ENCODE measurements at regions of chr4 and their contacts with region 1.

Region 1: GRCh38 chr4:88514557-88515511 is 8.7 kb downstream of the PYURF start:
- DNase-seq: no peak
- ATAC-seq: no peak
- H3K4me3 ChIP-seq: no peak overlapping the region
- H3K27ac ChIP-seq: no peak overlapping the region
- H3K4me1 ChIP-seq: peaks cover 0 to 3% (median 0%) of the 10 kb centered on the region in 12 donors
- H3K27me3 ChIP-seq: no peaks in the 10 kb centered on the region
- CTCF ChIP-seq: no peak
- POLR2A ChIP-seq: no peak

Region 2: DNA sequence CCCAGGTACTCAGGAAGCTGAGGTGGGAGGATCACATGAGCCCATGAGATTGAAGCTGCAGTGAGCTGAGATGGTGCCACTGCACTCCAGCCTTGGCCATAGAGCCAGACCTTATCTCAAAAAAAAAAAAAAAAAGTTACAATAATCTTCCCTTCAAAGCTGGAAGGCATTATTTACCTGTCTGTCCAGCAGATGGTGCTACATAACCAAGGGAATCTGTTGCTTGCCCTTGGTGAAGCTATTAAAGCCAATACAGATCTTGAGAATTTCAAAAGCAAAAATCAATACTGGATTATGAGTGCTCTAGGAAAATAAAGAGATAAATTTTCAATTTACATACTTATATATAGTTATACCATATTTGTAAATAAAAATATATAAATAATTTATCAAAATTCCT is 481.5 kb before region 1 on chr4:
- intact Hi-C with region 1: loop called in 8 of 10 experiments (anchors 5 to 10 kb)
- DNase-seq: peak in 2 of 5 donors; percentile 25 to 28
- ATAC-seq: peak in 3 of 4 donors; percentile 48 to 62 (median 62)
- H3K4me3 ChIP-seq: no peak overlapping the region
- H3K27ac ChIP-seq: no peak overlapping the region
- H3K4me1 ChIP-seq: peaks cover 0 to 11% (median 0%) of the 10 kb centered on the region in 12 donors
- H3K27me3 ChIP-seq: no peaks in the 10 kb centered on the region
- CTCF ChIP-seq: peak; percentile 54 to 76 (median 67)
- POLR2A ChIP-seq: no peak

Region 3: GRCh38 chr4:88217920-88218319 is 296.9 kb before region 1 on chr4:
- intact Hi-C with region 1: loop called (anchors 1 to 5 kb)
- DNase-seq: no peak
- ATAC-seq: no peak
- H3K4me3 ChIP-seq: no peak overlapping the region
- H3K27ac ChIP-seq: no peak overlapping the region
- H3K4me1 ChIP-seq: peaks cover 0 to 4% (median 0%) of the 10 kb centered on the region in 12 donors
- H3K27me3 ChIP-seq: no peaks in the 10 kb centered on the region
- CTCF ChIP-seq: no peak
- POLR2A ChIP-seq: no peak

Region 4: GRCh38 chr4:88284439-88285234 is 230.2 kb before region 1 on chr4 and contains the start of gene PPM1K:
- intact Hi-C with region 1: loop called in 2 of 10 experiments (anchors 5 kb)
- DNase-seq: peak; percentile 100
- ATAC-seq: peak; percentile 95 to 98 (median 96)
- H3K4me3 ChIP-seq: peak within 1 kb of the TSS; percentile 61 to 98 (median 80)
- H3K27ac ChIP-seq: peak within 1 kb of the TSS; percentile 94 to 99 (median 96)
- H3K4me1 ChIP-seq: peaks cover 0 to 37% (median 11%) of the 10 kb centered on the region in 12 donors
- H3K27me3 ChIP-seq: no peaks in the 10 kb centered on the region
- CTCF ChIP-seq: peak in 6 of 12 donors; percentile 8 to 47 (median 22)
- POLR2A ChIP-seq: peak; percentile 20 to 94
- total RNA-seq, gene PPM1K: 140 to 332 (median 245) TPM

Region 5: DNA sequence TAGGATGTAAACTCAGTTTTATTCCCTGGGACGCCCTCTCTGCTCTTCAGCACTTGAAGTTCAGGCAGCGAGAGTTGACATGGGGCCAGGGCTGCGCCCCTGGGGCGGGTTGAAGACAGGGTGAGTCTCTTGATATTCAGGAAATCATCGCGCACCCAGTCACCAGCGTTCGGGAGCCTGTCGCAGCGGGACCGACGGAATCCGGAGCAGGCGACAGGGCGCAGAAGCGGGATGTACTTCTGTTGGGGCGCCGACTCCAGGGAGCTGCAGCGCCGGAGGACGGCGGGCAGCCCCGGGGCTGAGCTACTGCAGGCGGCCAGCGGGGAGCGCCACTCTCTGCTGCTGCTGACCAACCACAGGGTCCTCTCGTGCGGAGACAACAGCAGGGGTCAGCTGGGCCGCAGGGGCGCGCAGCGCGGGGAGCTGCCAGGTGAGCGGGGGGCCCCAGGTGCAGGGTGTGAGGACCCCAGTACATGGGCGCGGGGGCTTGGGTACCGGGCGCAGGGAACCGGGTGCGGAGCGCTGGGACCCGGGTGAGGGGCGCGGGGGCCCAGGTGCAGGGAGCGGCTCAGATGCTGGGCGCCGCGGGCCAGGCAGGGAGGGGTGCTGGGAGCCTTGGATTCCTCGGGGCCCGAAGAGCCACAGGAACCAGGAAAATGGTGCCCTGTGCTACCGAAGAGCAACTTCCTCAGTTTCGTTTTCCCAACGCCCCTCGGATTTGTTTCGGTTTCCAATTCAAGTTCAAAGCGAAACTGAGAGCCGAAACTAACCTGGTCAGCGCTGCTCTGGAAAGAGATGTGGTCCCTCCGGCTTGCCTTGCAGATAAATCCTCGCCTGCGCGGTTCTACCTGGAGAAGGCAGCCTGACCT is 135.9 kb before region 1 on chr4 and contains the start of gene HERC6:
- intact Hi-C with region 1: loop called (anchors 5 to 10 kb)
- DNase-seq: peak; percentile 81 to 89 (median 83)
- ATAC-seq: peak; percentile 91 to 98 (median 97)
- H3K4me3 ChIP-seq: peak within 1 kb of the TSS; percentile 46 to 100 (median 90)
- H3K27ac ChIP-seq: peak within 1 kb of the TSS; percentile 91 to 100 (median 97)
- H3K4me1 ChIP-seq: peaks cover 0 to 17% (median 0%) of the 10 kb centered on the region in 12 donors
- H3K27me3 ChIP-seq: no peaks in the 10 kb centered on the region
- CTCF ChIP-seq: peak; percentile 53 to 89 (median 70)
- POLR2A ChIP-seq: no peak
- total RNA-seq, gene HERC6: 6.1 to 22.0 (median 15.6) TPM

Measured in heart left ventricle (tissue), 16 donors.